ENCODE measurements at regions of chr13 and their contacts with region 1.

Region 1: GRCh38 chr13:109778102-109778542 is 8.3 kb downstream of the IRS2 start:
- DNase-seq: no peak
- H3K4me3 Mint-ChIP-seq: peak overlapping the region; percentile 17
- H3K27ac Mint-ChIP-seq: no peak overlapping the region
- H3K4me1 Mint-ChIP-seq: peaks cover 17% of the 10 kb centered on the region
- H3K27me3 Mint-ChIP-seq: no peaks in the 10 kb centered on the region
- CTCF ChIP-seq: no peak

Region 2: GRCh38 chr13:109010912-109011311 is 767.2 kb before region 1 on chr13:
- CTCF ChIA-PET with region 1: no interaction called
- intact Hi-C with region 1: no loop called
- DNase-seq: no peak
- H3K4me3 Mint-ChIP-seq: no peak overlapping the region
- H3K27ac Mint-ChIP-seq: no peak overlapping the region
- H3K4me1 Mint-ChIP-seq: no peaks in the 10 kb centered on the region
- H3K27me3 Mint-ChIP-seq: no peaks in the 10 kb centered on the region
- CTCF ChIP-seq: no peak

Region 3: GRCh38 chr13:109162248-109163053 is 615.7 kb before region 1 on chr13:
- CTCF ChIA-PET with region 1: no interaction called
- intact Hi-C with region 1: loop called (anchors 5 kb)
- DNase-seq: peak; percentile 41
- H3K4me3 Mint-ChIP-seq: no peak overlapping the region
- H3K27ac Mint-ChIP-seq: no peak overlapping the region
- H3K4me1 Mint-ChIP-seq: peaks cover 18% of the 10 kb centered on the region
- H3K27me3 Mint-ChIP-seq: no peaks in the 10 kb centered on the region
- CTCF ChIP-seq: no peak